T-cell (primary cell): ENCODE measurements at regions of chr7 and their contacts with region 1.

Region 1: DNA sequence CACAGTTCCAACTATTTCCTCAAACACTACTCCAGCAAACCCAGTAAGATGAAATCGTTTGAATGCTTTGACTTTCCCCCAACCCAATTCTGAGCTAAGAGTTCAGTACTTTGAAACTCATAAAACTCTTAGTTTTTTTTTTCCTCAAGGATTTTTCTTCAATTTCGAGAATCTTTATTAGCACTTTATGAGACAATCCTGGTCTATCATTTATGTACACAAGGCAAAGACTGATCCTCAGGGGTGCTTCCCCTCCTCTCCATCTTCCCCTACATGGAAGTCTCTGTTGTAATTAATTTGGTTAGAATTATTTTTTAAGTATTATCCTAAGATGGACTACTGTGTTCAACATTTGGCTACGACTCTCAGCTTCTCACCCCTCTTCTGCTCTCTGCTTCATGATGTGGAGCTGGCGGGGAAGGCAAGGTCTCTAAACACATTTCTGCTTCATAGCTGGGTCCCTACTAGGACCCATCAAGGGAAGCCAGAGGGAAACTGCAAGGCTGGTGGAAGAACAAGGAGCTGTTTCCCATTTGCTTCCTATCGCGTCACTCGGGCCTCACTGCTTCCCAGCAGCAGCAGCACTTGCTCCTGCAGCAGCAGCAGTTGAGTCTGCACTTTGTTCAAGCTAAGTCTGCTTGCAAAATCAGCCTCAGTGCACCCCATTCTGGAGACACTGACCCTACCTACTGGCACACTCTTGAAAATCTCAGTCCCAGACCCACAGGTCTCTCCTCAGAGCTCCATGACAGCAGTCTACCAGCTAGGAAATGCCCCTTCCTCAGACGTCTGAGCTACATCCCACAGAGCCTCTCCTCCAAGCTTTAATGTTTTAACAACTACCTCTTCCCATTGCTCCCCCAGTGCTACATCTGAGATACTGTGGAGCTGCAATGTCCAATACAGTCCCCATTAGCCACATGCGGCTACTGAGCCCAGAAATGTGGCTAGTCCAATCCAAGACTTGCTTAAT is 90.0 kb downstream of the CHCHD3 start:
- DNase-seq: no peak
- ATAC-seq: no peak
- H3K4me3 ChIP-seq: no peak overlapping the region
- H3K4me3 Mint-ChIP-seq: no peak overlapping the region
- H3K27ac ChIP-seq: no peak overlapping the region
- H3K27ac Mint-ChIP-seq: no peak overlapping the region
- H3K4me1 ChIP-seq: no peaks in the 10 kb centered on the region
- H3K4me1 Mint-ChIP-seq: peaks cover 13 to 24% (median 20%) of the 10 kb centered on the region in 3 donors
- H3K27me3 ChIP-seq: no peaks in the 10 kb centered on the region
- H3K27me3 Mint-ChIP-seq: no peaks in the 10 kb centered on the region

Region 2: GRCh38 chr7:134954197-134955082 is 1962.5 kb after region 1 on chr7:
- CTCF ChIA-PET with region 1: interaction called in 1 of 2 experiments, 14 read pairs
- POLR2A ChIA-PET with region 1: no interaction called
- DNase-seq: peak in 1 of 35 experiments; percentile 64
- ATAC-seq: peak in 2 of 4 experiments; percentile 38 to 45
- H3K4me3 ChIP-seq: no peak overlapping the region
- H3K4me3 Mint-ChIP-seq: no peak overlapping the region
- H3K27ac ChIP-seq: no peak overlapping the region
- H3K27ac Mint-ChIP-seq: no peak overlapping the region
- H3K4me1 ChIP-seq: no peaks in the 10 kb centered on the region
- H3K4me1 Mint-ChIP-seq: no peaks in the 10 kb centered on the region
- H3K27me3 ChIP-seq: peaks cover 0 to 3% of the 10 kb centered on the region in 2 experiments
- H3K27me3 Mint-ChIP-seq: no peaks in the 10 kb centered on the region